PC-3 (cell line): ENCODE measurements at regions of chr2 and their contacts with region 1.

Region 1: DNA sequence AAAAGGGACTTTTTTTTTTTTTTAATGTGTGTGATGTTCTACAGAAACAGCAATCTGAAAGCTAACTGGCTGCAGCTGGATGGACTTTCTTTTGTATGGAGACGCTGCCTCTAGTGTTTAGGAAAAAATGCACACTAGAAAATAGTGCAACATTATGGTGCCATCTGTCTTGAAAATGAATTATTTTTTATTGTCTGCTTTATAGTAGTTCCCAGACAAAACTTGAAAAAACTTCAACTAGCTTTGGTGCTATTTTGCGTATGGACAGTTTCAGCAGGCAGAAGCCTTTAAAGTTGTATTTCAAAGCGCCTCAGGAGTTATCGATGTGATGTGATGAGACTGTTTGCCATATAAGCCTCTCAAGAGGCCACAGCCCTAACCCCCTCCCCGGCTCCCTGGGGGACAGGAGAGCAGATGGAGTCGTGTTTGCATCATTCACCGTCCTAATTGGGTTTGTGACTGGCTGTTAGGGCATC is 86.9 kb downstream of the LTBP1 start:
- DNase-seq: peak; percentile 72
- ATAC-seq: peak; percentile 93
- H3K4me3 ChIP-seq: no peak overlapping the region
- H3K27ac ChIP-seq: no peak overlapping the region
- H3K4me1 ChIP-seq: 0 out of 2 replicates have a peak, but pooled peaks cover 5% of the 10 kb centered on the region
- H3K27me3 ChIP-seq: no peaks in the 10 kb centered on the region
- CTCF ChIP-seq: peak; percentile 91

Region 2: DNA sequence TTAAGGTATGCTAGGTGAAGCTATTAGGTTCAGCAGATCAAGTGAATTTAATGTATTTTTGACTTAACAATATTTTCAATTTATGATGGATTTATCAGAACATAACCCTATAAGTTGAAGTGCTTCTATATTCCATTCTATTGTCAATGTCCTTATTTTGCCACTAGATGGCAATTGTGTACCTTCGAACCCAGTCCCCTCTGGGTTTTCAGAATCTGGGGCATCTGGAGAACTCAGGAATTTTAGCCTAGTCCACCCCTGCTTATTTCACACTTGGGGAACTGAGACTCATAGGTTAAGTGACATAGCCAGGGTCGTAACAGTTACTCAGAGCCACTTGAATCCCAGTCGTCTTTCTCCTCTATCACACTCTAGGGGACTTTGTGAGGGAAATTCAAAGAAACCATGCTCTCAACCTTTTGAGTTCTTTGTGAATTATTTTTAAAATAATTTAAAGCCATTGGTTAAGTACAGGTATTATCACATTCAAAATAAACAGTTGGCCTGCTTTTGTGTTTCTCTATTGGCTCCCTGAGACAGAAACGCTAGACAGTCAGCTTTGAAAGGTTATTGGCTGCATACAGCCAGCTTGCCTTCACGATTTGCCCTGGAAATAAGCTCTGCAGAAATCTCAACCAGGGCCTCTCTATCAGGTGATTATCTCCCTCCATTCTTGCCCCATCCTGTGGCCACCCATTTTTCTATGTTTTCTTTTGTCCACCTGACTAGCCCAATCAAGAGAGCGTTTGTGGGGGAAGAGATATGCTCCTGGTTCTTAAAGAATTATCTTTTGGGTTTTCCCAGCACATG is 260.8 kb before region 1 on chr2:
- CTCF ChIA-PET with region 1: interaction called, 7 read pairs
- POLR2A ChIA-PET with region 1: interaction called, 9 read pairs
- intact Hi-C with region 1: loop called (anchors 1 kb)
- DNase-seq: peak; percentile 73
- ATAC-seq: peak; percentile 75
- H3K4me3 ChIP-seq: no peak overlapping the region
- H3K27ac ChIP-seq: no peak overlapping the region
- H3K4me1 ChIP-seq: no peaks in the 10 kb centered on the region
- H3K27me3 ChIP-seq: no peaks in the 10 kb centered on the region
- CTCF ChIP-seq: peak; percentile 91

Region 3: DNA sequence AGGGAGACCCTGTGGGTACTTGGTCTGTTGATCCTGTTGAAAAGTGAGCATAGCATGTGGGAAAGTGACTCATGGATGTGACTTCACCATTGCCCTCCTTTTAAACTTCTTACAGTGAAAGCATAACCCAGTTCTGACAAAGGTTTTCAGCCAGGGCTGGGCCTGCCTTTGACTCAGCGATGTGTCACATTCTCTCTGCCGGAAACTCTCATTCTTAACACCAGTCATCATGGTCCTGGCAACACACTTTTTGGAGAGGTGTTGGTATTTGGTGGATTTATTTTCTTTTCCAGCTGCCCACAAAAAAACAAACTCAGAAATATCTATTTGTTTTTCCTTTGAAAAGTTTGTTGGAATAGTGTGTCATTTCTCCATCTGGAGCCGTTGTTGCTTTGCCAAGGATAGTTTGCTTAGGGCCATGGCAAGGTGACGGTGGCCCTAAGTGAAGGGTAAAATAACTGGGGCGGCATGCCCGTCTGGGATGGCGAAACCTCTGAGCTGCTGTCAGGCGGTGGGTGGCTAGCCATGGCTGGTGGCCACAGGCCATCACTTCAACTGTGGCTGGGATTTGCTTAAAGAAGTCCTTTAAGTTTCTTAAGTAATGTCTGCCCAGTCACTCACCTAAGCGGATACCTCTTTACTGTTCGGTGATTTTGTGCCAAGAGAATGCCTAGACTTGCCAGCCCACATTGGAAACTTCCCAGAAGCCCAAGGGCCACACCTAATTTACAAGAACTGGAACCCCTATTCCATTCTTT is 36.4 kb after region 1 on chr2:
- CTCF ChIA-PET with region 1: no interaction called
- POLR2A ChIA-PET with region 1: no interaction called
- intact Hi-C with region 1: loop called (anchors 2 kb)
- DNase-seq: peak; percentile 99
- ATAC-seq: peak; percentile 86
- H3K4me3 ChIP-seq: peak overlapping the region; percentile 19; the same call in 1 of the 2 replicates
- H3K27ac ChIP-seq: peak overlapping the region; percentile 98
- H3K4me1 ChIP-seq: peaks cover 62% of the 10 kb centered on the region
- H3K27me3 ChIP-seq: no peaks in the 10 kb centered on the region
- CTCF ChIP-seq: no peak

Region 4: DNA sequence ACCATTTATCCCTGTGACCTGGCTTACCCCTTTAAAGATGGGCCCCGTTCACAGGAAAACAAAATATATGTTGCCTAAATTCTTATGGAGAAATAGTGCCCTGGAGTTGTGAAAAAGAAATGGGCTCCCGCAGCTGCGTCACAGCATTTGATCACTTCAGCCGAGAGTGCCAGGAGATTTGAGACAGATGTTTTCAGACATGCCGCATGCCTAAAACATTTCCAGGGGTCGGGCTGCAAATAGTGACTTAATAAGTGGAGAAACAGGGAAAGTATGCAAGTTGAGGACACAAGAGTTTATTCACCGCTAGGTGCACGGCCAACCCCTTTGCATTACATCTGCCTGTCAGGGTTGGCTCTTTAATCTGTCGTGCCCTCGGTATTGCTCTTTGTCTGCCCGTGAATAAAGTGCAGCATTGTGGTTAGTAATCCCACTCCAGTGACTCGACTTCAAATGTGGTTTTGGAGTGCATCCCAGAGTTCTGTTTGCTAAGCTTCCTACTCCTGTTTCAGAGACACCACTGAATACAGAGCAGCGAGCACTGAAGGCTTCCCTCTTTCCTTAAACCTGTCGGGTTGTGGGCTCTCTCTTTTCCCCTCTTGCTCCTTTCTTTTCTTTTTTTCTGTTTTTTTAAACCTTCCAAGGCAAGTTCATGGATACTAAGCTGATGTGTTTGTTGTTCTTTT is 100.6 kb after region 1 on chr2:
- CTCF ChIA-PET with region 1: interaction called, 3 read pairs
- POLR2A ChIA-PET with region 1: no interaction called
- intact Hi-C with region 1: loop called (anchors 2 kb)
- DNase-seq: peak; percentile 98
- ATAC-seq: peak; percentile 88
- H3K4me3 ChIP-seq: peak overlapping the region; percentile 75
- H3K27ac ChIP-seq: peak overlapping the region; percentile 89
- H3K4me1 ChIP-seq: peaks cover 57% of the 10 kb centered on the region
- H3K27me3 ChIP-seq: no peaks in the 10 kb centered on the region
- CTCF ChIP-seq: peak; percentile 51

Region 5: GRCh38 chr2:33192048-33192447 is 158.4 kb after region 1 on chr2:
- CTCF ChIA-PET with region 1: no interaction called
- POLR2A ChIA-PET with region 1: no interaction called
- intact Hi-C with region 1: no loop called
- DNase-seq: no peak
- ATAC-seq: no peak
- H3K4me3 ChIP-seq: no peak overlapping the region
- H3K27ac ChIP-seq: no peak overlapping the region
- H3K4me1 ChIP-seq: peaks cover 17% of the 10 kb centered on the region
- H3K27me3 ChIP-seq: no peaks in the 10 kb centered on the region
- CTCF ChIP-seq: no peak

Region 6: DNA sequence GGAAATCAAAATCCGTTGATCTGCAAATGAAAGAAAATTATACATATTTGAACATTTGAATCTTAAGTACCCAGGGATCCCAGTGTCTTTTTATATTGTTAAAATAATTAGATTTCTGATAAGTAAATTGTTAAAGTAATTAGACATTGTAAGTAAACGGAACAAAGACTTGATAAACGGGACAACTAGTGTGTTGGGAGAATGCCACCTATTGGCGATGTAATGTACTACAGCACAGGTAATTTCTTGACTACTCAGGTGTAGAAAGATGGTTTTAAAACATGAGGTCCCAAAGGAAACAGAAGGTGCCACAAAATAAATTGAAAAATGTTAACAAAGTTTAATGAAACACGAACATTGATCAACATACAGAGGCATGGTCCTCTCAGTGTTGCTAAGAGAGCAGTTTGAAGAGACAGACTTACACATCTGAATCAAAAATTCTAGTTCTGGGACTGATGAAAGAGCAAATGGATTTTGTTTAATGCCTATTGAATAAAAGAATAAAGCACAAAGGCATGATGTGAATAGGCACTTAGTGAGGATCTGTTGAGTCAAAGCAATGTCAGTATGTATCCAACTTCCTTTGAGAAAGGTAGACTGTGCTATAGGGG is 339.4 kb after region 1 on chr2:
- CTCF ChIA-PET with region 1: interaction called, 3 read pairs
- POLR2A ChIA-PET with region 1: no interaction called
- intact Hi-C with region 1: loop called (anchors 1 kb)
- DNase-seq: peak; percentile 86
- ATAC-seq: peak; percentile 45; the same call in 1 of the 2 replicates
- H3K4me3 ChIP-seq: no peak overlapping the region
- H3K27ac ChIP-seq: peak overlapping the region; percentile 50
- H3K4me1 ChIP-seq: peaks cover 8% of the 10 kb centered on the region; the same call in 1 of the 2 replicates
- H3K27me3 ChIP-seq: no peaks in the 10 kb centered on the region
- CTCF ChIP-seq: peak; percentile 90

Region 7: DNA sequence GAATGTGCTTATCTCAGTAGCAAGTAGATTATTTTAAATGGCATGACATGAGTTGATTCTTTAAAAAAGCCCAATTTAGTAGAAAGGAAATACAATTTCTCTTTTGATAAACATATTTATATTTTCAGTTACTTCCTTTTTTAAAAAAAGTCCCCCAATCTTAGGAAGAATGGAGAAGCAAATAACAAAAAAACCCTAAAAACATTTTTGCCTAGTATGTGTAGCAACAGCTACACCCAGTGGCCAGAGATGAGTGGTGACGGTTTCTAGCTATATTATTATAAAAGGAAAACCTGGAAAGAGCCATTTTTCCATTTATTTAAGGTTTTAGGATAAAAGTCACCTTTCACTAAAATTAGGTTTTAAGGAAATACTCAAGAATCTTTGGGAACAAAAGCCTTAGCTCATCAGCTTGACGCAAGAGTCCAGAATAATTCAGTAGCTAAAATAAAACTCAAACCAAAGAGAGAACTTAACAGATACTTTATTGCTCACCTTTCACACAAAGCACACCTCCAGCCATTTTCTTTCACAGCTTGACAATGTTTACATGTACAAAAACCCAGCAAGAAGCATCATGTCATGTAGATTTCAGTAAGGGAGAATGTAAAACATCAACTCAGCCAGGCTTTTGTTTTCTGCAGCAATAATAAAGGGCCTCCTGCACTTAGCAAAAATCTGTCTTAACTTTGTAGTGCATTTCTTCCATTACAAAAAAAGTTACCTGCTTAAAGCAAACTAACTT is 549.7 kb after region 1 on chr2:
- CTCF ChIA-PET with region 1: no interaction called
- POLR2A ChIA-PET with region 1: no interaction called
- intact Hi-C with region 1: loop called (anchors 1 kb)
- DNase-seq: peak; percentile 60
- ATAC-seq: no peak
- H3K4me3 ChIP-seq: no peak overlapping the region
- H3K27ac ChIP-seq: no peak overlapping the region
- H3K4me1 ChIP-seq: no peaks in the 10 kb centered on the region
- H3K27me3 ChIP-seq: no peaks in the 10 kb centered on the region
- CTCF ChIP-seq: peak; percentile 91